Mammary epithelial cell (primary cell): ENCODE measurements at regions of chr3 and their contacts with region 1.

Region 1: DNA sequence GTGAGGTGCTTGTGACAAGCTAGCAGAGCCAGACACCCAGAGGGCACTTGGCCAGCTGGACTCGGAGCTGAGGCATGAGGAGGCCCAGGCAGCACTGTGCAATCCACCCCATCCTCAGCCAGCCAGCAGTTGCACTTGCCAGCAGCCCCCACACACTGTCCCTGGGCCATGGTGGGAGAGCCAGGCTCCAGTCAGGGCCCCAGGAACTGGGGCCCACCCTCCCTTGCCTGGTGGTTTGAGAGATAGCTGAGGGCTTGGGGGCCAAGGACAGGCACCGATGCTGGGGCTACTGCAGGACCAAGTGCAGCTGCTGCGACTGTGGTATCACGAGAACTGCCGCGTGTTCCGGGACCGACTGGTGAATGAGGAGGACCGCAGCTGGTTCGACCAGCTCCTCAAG is 63.5 kb downstream of the DNAH1 start:
- DNase-seq: no peak
- H3K4me3 ChIP-seq: no peak overlapping the region
- H3K27ac ChIP-seq: no peak overlapping the region
- H3K4me1 ChIP-seq: no peaks in the 10 kb centered on the region
- H3K27me3 ChIP-seq: no peaks in the 10 kb centered on the region
- CTCF ChIP-seq: no peak

Region 2: GRCh38 chr3:52299879-52300611 is 79.6 kb before region 1 on chr3:
- CTCF ChIA-PET with region 1: no interaction called
- dilution Hi-C with region 1: loop called (anchors 5 kb)
- in situ Hi-C with region 1: no loop called
- intact Hi-C with region 1: no loop called
- DNase-seq: peak; percentile 29
- H3K4me3 ChIP-seq: no peak overlapping the region
- H3K27ac ChIP-seq: no peak overlapping the region
- H3K4me1 ChIP-seq: no peaks in the 10 kb centered on the region
- H3K27me3 ChIP-seq: no peaks in the 10 kb centered on the region
- CTCF ChIP-seq: peak in 1 of 2 donors; percentile 15

Region 3: GRCh38 chr3:52328536-52329080 is 51.0 kb before region 1 on chr3:
- CTCF ChIA-PET with region 1: no interaction called
- dilution Hi-C with region 1: loop called (anchors 5 kb)
- in situ Hi-C with region 1: no loop called
- intact Hi-C with region 1: no loop called
- DNase-seq: no peak
- H3K4me3 ChIP-seq: no peak overlapping the region
- H3K27ac ChIP-seq: no peak overlapping the region
- H3K4me1 ChIP-seq: peaks cover under 1% of the 10 kb centered on the region
- H3K27me3 ChIP-seq: no peaks in the 10 kb centered on the region
- CTCF ChIP-seq: no peak